ENCODE measurements at regions of chr14 and their contacts with region 1.

Region 1: GRCh38 chr14:20327005-20327869 is 5.8 kb downstream of the CCNB1IP1 start:
- DNase-seq: peak; percentile 52
- ATAC-seq: peak; percentile 65
- H3K4me3 Mint-ChIP-seq: no peak overlapping the region
- H3K27ac Mint-ChIP-seq: peak overlapping the region; percentile 13
- H3K4me1 Mint-ChIP-seq: peaks cover 42% of the 10 kb centered on the region
- H3K27me3 Mint-ChIP-seq: no peaks in the 10 kb centered on the region

Region 2: DNA sequence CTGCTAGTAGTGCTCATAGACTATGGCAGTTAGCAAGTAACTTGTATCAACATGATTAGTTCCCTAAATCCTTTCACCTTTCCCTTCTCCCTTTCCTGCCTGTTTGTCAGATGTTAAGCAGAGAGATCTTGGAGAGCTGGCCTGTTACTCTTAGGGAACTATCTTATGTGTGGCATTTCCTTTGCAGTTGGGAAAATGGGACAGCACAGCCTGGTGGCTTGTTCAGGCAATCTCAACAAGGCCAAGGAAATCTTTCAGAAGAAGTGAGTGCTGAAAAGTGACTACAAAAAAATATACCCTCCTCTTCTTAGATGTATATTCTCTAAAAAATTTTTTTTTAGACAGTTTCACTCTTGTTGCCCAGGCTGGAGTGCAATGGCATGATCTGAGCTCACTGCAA is 23.6 kb after region 1 on chr14:
- CTCF ChIA-PET with region 1: interaction called, 20 read pairs
- POLR2A ChIA-PET with region 1: no interaction called
- DNase-seq: no peak
- ATAC-seq: no peak
- H3K4me3 Mint-ChIP-seq: no peak overlapping the region
- H3K27ac Mint-ChIP-seq: no peak overlapping the region
- H3K4me1 Mint-ChIP-seq: peaks cover 4% of the 10 kb centered on the region
- H3K27me3 Mint-ChIP-seq: no peaks in the 10 kb centered on the region

Region 3: GRCh38 chr14:20413045-20413799 is 86.0 kb after region 1 on chr14 and contains the start of gene TEP1:
- CTCF ChIA-PET with region 1: interaction called, 44 read pairs
- POLR2A ChIA-PET with region 1: no interaction called
- DNase-seq: peak; percentile 82
- ATAC-seq: peak; percentile 92
- H3K4me3 Mint-ChIP-seq: peak within 1 kb of the TSS; percentile 94
- H3K27ac Mint-ChIP-seq: peak within 1 kb of the TSS; percentile 95
- H3K4me1 Mint-ChIP-seq: peaks cover 42% of the 10 kb centered on the region
- H3K27me3 Mint-ChIP-seq: no peaks in the 10 kb centered on the region
- total RNA-seq, gene TEP1: 34.6 to 48.7 TPM

Region 4: GRCh38 chr14:20624495-20625070 is 297.3 kb after region 1 on chr14:
- CTCF ChIA-PET with region 1: interaction called, 10 read pairs
- POLR2A ChIA-PET with region 1: no interaction called
- DNase-seq: peak; percentile 68
- ATAC-seq: peak; percentile 66
- H3K4me3 Mint-ChIP-seq: peak overlapping the region; percentile 66
- H3K27ac Mint-ChIP-seq: peak overlapping the region; percentile 61
- H3K4me1 Mint-ChIP-seq: peaks cover 51% of the 10 kb centered on the region
- H3K27me3 Mint-ChIP-seq: peaks cover 60% of the 10 kb centered on the region

Region 5: GRCh38 chr14:20690848-20691523 is 363.7 kb after region 1 on chr14:
- CTCF ChIA-PET with region 1: interaction called, 10 read pairs
- POLR2A ChIA-PET with region 1: no interaction called
- DNase-seq: peak; percentile 61
- ATAC-seq: peak; percentile 81
- H3K4me3 Mint-ChIP-seq: no peak overlapping the region
- H3K27ac Mint-ChIP-seq: no peak overlapping the region
- H3K4me1 Mint-ChIP-seq: peaks cover 11% of the 10 kb centered on the region
- H3K27me3 Mint-ChIP-seq: no peaks in the 10 kb centered on the region

Measured in activated CD8-positive, alpha-beta T cell treated with anti-CD3 and anti-CD28 coated beads, Interleukin-2, amount 10 ng/mL, durations not matched to agents 7 days and 5 days (primary cell).